Psoas muscle (tissue), 8 donors: ENCODE measurements at regions of chr22 and their contacts with region 1.

Region 1: DNA sequence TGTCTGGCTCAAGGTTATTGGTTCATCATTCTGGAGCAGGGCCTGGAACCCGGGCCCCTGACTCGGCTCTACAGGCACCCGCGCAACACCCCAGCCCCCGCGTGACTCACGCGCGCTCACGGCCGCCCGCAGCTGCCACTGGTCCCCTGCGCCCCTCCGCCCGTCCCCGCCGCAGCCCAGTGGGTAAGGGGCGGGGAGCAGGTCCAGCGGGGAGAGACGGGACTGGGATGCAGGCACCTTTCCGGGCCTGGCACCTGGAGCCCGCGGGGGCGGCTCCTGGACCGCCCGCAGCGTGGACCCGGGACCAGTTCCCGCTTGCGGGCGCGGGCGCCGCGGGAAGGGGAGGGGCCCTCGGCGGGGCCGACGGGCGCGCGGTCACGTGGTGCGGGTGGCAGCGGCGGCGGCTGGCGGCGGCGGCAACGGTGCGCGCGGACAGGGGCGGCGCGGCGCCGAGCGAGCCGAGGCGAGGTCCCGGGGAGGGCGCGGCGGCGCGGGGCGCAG is 7.2 kb downstream of the SEPTIN3 start:
- DNase-seq: peak in 1 of 2 donors; percentile 66
- ATAC-seq: peak; percentile 45 to 90 (median 78)
- H3K4me3 ChIP-seq: peak overlapping the region; percentile 65
- H3K27ac ChIP-seq: no peak overlapping the region
- H3K4me1 ChIP-seq: no peaks in the 10 kb centered on the region
- H3K27me3 ChIP-seq: peaks cover 0 to 55% (median 2%) of the 10 kb centered on the region in 3 donors
- CTCF ChIP-seq: no peak

Region 2: DNA sequence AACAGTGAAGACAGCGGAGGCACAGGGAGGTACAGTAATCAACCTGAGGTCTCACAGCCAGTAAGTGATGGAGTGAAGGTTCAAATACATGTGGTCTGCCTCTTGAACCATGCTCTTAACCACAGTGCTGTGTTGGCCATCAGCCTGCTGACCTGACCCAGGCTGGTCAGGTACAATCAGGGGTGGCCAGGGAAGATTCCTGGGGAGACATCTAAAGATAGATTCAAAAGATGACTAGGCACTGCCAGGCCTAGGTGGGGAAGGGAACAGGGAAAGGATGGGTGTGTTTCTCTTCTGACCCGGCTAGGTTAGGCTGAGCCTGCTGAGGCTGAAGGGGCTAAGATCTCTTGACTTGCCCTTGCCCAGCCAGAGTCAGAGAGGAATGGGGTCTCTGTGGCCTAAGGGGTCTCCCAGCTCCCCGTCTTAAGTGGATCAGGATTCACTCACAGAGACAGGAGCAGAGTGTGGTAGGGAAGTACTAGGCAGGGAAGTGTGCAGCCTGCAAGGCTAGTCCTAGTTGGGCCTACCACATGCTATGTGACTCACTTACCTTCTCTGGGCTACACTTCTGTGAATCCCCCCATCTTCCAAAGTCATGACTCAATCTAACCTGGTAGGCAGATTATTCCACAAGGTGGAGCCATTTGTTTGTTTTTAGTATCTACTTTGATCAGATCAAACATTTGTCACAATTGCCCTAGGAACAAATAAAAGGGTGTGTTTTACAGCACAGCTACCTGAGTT is 154.0 kb before region 1 on chr22:
- intact Hi-C with region 1: no loop called
- DNase-seq: no peak
- ATAC-seq: peak in 3 of 4 donors; percentile 27 to 53 (median 47)
- H3K4me3 ChIP-seq: no peak overlapping the region
- H3K27ac ChIP-seq: no peak overlapping the region
- H3K4me1 ChIP-seq: peaks cover 23% of the 10 kb centered on the region
- H3K27me3 ChIP-seq: no peaks in the 10 kb centered on the region
- CTCF ChIP-seq: peak; percentile 56

Region 3: GRCh38 chr22:42033263-42034181 is 57.1 kb after region 1 on chr22:
- intact Hi-C with region 1: no loop called
- DNase-seq: no peak
- ATAC-seq: no peak
- H3K4me3 ChIP-seq: no peak overlapping the region
- H3K27ac ChIP-seq: no peak overlapping the region
- H3K4me1 ChIP-seq: no peaks in the 10 kb centered on the region
- H3K27me3 ChIP-seq: no peaks in the 10 kb centered on the region
- CTCF ChIP-seq: no peak

Region 4: GRCh38 chr22:42134100-42135020 is 157.9 kb after region 1 on chr22:
- intact Hi-C with region 1: loop called in 1 of 2 experiments (anchors 5 kb)
- DNase-seq: no peak
- ATAC-seq: peak; percentile 34 to 59 (median 54)
- H3K4me3 ChIP-seq: peak overlapping the region; percentile 47
- H3K27ac ChIP-seq: no peak overlapping the region
- H3K4me1 ChIP-seq: peaks cover 3% of the 10 kb centered on the region
- H3K27me3 ChIP-seq: no peaks in the 10 kb centered on the region
- CTCF ChIP-seq: no peak

Region 5: DNA sequence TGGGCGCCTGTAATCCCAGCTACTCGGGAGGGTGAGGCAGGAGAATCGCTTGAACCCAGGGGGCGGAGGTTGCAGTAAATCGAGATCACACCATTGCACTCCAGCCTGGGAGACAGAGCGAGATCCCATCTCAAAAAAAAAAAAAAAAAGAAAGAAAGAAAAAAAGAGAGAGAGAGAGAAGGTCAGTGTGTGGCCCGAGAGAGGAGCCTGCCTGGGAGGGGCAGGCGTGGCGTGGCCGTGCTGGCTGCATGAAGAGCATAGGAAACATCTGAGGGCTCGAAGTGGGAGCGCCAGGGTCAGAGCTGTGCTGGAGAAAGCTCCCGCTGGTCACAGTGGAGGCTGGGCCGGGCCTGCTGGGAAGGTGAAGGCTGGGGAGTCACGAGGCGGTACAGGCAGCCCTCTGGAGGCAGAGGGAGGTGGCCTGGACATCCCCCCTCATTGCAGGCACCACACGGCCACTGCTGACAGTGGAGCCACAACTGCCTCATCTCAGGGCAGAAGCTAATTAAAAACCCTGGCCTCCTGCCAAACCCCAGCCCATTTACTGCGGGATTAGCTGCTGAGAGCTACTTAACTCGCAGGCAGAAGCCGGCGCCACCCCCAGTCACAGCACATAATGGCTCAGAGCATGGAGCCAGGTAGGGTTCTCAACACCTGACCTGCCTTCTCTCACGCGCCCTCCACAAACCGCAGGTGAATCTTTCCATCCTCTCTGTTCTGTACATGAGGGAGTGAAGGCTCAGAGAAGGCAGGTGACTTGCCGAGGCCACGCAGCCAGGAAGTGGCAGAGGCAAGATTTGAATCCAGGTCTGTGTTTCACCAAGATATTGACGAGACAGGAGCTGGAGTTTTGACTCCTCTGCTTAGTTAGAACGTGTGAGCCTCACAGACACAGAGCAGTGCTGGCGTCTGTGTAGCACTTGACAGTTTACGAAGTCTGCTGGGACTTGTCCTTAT is 423.1 kb after region 1 on chr22:
- intact Hi-C with region 1: no loop called
- DNase-seq: no peak
- ATAC-seq: no peak
- H3K4me3 ChIP-seq: no peak overlapping the region
- H3K27ac ChIP-seq: no peak overlapping the region
- H3K4me1 ChIP-seq: no peaks in the 10 kb centered on the region
- H3K27me3 ChIP-seq: peaks cover 0 to 40% (median 0%) of the 10 kb centered on the region in 3 donors
- CTCF ChIP-seq: no peak